Mammary epithelial cell (primary cell): ENCODE measurements at regions of chr7 and their contacts with region 1.

Region 1: GRCh38 chr7:50467817-50468610 is 17.9 kb upstream of the FIGNL1 start:
- DNase-seq: peak; percentile 50
- H3K4me3 ChIP-seq: no peak overlapping the region
- H3K27ac ChIP-seq: no peak overlapping the region
- H3K4me1 ChIP-seq: no peaks in the 10 kb centered on the region
- H3K27me3 ChIP-seq: no peaks in the 10 kb centered on the region
- CTCF ChIP-seq: peak; percentile 68 to 94

Region 2: DNA sequence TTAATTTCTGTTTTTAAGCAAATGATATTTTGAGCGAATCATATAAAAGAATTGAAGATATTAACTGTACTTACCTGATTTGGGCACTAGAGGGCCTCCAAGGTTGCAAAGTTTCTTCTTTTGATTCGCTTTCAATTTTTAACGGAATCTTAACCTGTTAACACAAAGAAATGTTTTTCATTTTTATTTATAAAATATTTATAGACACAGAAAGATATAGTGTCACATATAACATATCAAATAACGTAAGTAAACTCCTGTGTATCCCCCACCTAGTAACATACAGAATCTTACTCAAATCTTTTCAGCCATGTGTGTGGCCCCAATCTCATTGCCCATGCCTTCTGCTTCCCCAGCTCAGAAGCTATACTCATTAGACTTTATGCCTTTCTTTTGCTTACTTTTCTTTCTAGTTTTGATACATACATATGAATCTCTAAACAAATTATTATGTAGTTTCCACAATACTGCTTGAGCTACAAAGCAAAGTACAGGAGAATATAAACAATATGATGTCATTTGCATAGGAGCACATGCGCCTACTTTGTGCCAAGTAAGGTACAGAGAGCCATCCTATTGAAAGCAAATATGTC is 325.5 kb before region 1 on chr7:
- CTCF ChIA-PET with region 1: no interaction called
- dilution Hi-C with region 1: no loop called
- in situ Hi-C with region 1: no loop called
- intact Hi-C with region 1: loop called (anchors 5 kb)
- DNase-seq: no peak
- H3K4me3 ChIP-seq: no peak overlapping the region
- H3K27ac ChIP-seq: no peak overlapping the region
- H3K4me1 ChIP-seq: no peaks in the 10 kb centered on the region
- H3K27me3 ChIP-seq: no peaks in the 10 kb centered on the region
- CTCF ChIP-seq: peak; percentile 61 to 67

Region 3: GRCh38 chr7:50502001-50502684 is 34.1 kb after region 1 on chr7:
- CTCF ChIA-PET with region 1: no interaction called
- dilution Hi-C with region 1: no loop called
- in situ Hi-C with region 1: no loop called
- intact Hi-C with region 1: no loop called
- DNase-seq: peak; percentile 86
- H3K4me3 ChIP-seq: no peak overlapping the region
- H3K27ac ChIP-seq: peak overlapping the region; percentile 76
- H3K4me1 ChIP-seq: peaks cover 34% of the 10 kb centered on the region
- H3K27me3 ChIP-seq: no peaks in the 10 kb centered on the region
- CTCF ChIP-seq: no peak

Region 4: DNA sequence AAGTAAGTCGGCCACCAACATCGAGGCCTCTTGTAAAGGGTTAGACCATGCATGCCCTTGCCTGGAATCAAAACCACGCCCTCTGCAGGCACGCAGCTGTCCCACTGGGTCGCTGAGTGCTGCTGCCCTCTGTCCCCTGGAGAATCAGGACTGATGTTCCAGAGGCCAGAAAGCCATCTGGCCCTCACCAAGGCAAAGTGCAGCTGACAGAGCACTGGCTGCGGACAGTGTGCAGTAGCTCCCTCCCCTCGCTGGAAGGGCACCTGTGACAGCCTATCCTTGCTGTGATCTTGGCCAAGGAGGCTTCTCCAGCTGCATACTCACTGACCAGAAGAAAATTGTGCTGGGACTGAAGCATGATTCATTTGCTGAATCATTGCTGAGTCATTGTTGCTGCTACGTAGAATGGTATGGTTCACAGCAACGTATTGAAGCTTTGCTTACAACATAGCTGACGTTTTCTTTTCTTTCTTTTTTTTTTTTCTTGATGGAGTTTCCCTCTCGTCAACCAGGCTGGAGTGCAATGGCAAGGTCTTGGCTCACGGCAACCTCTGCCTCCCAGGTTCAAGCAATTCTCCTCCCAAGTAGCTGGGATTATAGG is 66.8 kb after region 1 on chr7:
- CTCF ChIA-PET with region 1: no interaction called
- dilution Hi-C with region 1: no loop called
- in situ Hi-C with region 1: no loop called
- intact Hi-C with region 1: loop called (anchors 5 kb)
- DNase-seq: peak; percentile 99
- H3K4me3 ChIP-seq: no peak overlapping the region
- H3K27ac ChIP-seq: peak overlapping the region; percentile 88
- H3K4me1 ChIP-seq: peaks cover 37% of the 10 kb centered on the region
- H3K27me3 ChIP-seq: no peaks in the 10 kb centered on the region
- CTCF ChIP-seq: peak in 1 of 2 donors; percentile 13

Region 5: DNA sequence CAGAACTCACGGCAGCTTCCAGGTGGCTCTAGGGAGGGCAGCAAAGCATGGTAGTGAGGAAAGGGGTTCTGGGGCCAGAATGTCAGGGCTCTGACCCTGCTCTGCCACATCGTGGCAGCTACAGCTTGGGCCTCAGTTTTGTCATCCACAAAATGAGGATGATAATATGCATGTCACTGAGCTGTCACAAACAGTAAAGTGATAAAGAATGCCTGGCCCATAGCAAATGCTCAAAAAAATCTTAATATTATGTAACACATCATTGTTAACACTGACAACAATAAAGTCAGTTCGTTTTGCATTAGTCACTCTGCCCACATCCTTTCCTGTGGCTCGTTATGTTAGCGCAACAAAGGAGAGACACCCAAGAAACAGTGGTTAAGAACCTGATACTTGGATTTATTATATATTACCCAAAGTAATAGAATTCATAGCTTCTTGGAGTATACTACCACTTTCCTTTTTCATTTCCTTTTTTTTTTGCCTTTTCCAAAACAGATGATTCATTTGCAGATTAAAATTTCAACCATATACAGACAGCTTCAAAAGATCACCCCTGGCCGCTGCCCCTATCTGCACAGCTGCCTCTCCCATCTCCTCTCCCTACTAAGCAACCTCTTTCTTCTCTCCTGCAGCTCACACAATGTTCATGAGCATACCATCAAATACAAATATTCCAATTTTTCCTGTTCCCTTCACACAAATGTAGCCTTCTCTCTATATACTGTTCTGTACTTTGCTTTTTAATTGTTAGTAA is 142.7 kb after region 1 on chr7:
- CTCF ChIA-PET with region 1: no interaction called
- dilution Hi-C with region 1: no loop called
- in situ Hi-C with region 1: no loop called
- intact Hi-C with region 1: loop called (anchors 5 kb)
- DNase-seq: peak; percentile 81
- H3K4me3 ChIP-seq: no peak overlapping the region
- H3K27ac ChIP-seq: no peak overlapping the region
- H3K4me1 ChIP-seq: peaks cover 16% of the 10 kb centered on the region
- H3K27me3 ChIP-seq: peaks cover 2% of the 10 kb centered on the region
- CTCF ChIP-seq: no peak

Region 6: DNA sequence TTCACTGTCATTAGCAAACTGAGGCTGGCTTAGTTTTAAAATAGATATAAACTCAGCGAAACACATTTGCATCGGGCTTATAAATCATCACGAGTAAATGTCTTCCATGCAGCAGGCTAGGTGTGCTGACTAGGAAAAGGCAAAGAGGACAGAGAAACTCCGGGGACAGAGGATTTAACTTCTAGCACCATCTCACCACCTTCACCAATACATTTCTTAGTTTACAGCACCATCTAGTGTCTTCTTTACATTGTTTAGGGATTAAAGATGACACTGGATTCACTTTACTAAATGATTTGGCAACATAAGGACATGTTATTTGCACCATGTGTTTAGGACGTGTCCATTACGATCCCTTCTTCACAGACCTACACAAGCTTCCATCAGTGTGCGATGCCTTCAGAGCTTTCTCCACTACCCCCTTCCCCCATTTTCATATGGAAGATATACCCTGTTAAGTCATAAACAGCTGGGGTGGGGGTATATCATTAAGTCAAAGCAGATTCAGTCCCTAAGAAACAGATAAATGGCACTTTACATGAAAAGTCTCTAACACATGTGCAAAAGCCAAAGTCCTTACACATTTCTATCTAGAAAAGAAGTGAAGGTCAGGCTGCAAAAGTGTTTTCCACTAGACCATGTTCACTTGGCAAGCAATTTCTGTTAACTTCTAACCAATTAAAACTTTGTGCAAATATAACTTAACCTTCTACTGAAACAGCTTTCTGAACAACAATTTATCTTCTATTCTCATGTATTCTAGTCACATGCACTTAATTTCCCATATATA is 211.4 kb after region 1 on chr7:
- CTCF ChIA-PET with region 1: no interaction called
- dilution Hi-C with region 1: no loop called
- in situ Hi-C with region 1: loop called (anchors 5 to 10 kb)
- intact Hi-C with region 1: loop called (anchors 1 kb)
- DNase-seq: peak; percentile 50
- H3K4me3 ChIP-seq: no peak overlapping the region
- H3K27ac ChIP-seq: no peak overlapping the region
- H3K4me1 ChIP-seq: no peaks in the 10 kb centered on the region
- H3K27me3 ChIP-seq: peaks cover 2% of the 10 kb centered on the region
- CTCF ChIP-seq: peak; percentile 27 to 53

Region 7: DNA sequence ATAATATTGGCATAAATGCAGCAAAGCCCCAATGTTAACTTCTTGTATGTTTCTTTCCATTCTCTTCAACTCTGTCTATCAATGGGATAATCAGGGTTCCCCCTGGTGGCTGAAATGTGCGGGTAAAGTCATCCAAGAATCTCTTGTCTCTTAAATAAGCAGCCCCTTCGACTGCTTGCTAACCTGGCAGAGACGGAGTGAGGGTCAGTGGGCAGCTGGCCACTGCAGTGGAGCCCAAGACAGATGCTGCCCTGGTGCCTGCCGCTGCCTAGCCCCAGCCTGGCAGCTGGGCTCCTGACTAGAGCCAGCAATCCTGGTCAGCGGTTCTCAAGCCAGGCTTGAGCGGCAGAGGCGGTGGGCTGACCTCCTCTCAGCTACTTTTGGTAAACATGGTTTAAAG is 599.7 kb after region 1 on chr7:
- CTCF ChIA-PET with region 1: interaction called, 6 read pairs
- dilution Hi-C with region 1: no loop called
- in situ Hi-C with region 1: no loop called
- intact Hi-C with region 1: loop called (anchors 1 kb)
- DNase-seq: peak; percentile 42
- H3K4me3 ChIP-seq: no peak overlapping the region
- H3K27ac ChIP-seq: no peak overlapping the region
- H3K4me1 ChIP-seq: peaks cover 17% of the 10 kb centered on the region
- H3K27me3 ChIP-seq: peaks cover 1% of the 10 kb centered on the region
- CTCF ChIP-seq: peak; percentile 72 to 79

Region 8: GRCh38 chr7:51162724-51163329 is 694.8 kb after region 1 on chr7:
- CTCF ChIA-PET with region 1: no interaction called
- dilution Hi-C with region 1: no loop called
- in situ Hi-C with region 1: no loop called
- intact Hi-C with region 1: loop called (anchors 1 kb)
- DNase-seq: peak; percentile 72
- H3K4me3 ChIP-seq: no peak overlapping the region
- H3K27ac ChIP-seq: no peak overlapping the region
- H3K4me1 ChIP-seq: no peaks in the 10 kb centered on the region
- H3K27me3 ChIP-seq: peaks cover 2% of the 10 kb centered on the region
- CTCF ChIP-seq: peak; percentile 87 to 90